ENCODE measurements at regions of chr3 and their contacts with region 1.

Region 1: DNA sequence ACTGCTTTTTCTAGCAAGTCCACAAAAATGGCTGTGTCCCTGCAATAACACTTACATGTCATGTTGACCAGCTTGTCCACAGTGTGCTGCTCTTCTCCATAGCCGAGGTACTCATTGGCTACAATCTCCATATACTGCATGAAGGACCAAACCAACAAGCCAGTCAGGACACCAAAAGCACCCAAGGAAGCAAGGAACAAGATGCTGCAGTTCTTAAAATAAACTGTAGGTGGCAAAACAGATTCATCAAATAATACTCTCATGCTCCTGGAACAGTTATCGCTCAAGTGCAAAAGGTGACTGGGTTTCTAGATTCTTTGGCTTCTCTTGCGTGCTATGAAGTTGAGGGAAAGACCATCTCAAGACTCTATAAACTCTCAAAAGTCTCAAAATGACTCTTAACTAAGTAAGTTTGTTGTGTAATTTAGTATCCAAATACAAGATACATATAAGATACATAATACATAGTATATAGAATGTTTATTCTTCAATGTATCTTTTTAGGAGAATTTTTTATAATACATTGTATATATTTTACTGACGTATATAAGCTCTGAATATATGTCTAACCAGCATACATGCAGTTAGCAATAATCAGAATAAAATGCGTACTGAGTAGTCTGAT is 57.0 kb downstream of the NEK10 start:
- DNase-seq: no peak

Region 2: DNA sequence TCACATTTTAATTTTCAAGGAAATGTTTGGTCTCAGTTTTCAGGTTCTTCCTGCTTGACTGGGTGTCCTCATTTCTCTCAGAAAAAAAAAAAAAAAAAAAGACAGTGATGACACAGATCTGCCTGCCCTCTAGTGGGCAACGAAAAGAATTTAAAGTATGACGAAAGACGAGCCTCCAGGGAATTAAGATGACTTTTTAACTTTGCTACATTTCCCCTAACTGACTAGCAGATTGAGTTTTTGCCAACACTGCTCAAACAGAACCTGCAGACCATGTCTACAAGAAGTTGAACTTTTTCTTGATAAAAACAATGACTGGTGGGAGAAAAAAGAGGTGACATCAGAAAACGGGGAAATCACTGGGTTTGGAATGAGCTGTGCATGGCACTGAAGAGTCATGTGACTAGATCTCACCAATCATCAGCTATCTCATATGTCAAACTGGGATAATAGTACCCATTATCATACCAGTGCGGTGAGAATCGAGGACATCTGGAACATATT is 369.1 kb after region 1 on chr3:
- intact Hi-C with region 1: loop called in 1 of 2 experiments (anchors 10 kb)
- DNase-seq: no peak

Measured in posterior vena cava (tissue), 2 donors.